A549 (cell line): ENCODE measurements at regions of chr3 and their contacts with region 1.

Region 1: GRCh38 chr3:42190701-42191462 is 75.1 kb downstream of the CCK start:
- DNase-seq: peak; percentile 47 to 61
- ATAC-seq: peak; percentile 90 to 95
- H3K4me3 ChIP-seq: no peak overlapping the region
- H3K27ac ChIP-seq: 0 out of 6 replicates have a peak overlapping the region, but pooled peaks of 1 of the 2 experiments have one; percentile 35
- H3K4me1 ChIP-seq: no peaks in the 10 kb centered on the region
- CTCF ChIP-seq: peak; percentile 78
- EP300 ChIP-seq: no peak
- POLR2A ChIP-seq: no peak
- RAD21 ChIP-seq: peak; percentile 73 to 74

Region 2: DNA sequence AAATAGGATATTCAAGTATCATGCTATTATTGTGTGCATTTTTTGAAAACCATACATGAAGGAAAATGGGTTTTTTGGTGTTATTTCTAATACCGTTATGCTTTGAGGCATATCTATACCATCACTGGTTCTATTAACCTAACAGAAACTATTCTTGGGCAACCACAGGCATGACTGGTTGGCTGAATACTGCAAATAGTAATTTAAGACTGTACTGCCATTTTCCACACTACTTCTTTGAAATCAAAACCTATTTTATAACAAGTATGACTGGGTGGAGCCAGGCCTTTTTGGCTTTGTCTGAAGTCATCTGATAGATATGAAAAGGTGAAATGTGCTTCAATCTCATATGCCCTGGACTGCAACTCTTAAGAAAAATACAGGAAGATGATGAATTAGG is 344.0 kb before region 1 on chr3:
- CTCF ChIA-PET with region 1: no interaction called
- POLR2A ChIA-PET with region 1: no interaction called
- DNase-seq: no peak
- ATAC-seq: no peak
- H3K4me3 ChIP-seq: no peak overlapping the region
- H3K27ac ChIP-seq: no peak overlapping the region
- H3K4me1 ChIP-seq: no peaks in the 10 kb centered on the region
- CTCF ChIP-seq: no peak
- EP300 ChIP-seq: no peak
- POLR2A ChIP-seq: no peak
- RAD21 ChIP-seq: no peak

Region 3: DNA sequence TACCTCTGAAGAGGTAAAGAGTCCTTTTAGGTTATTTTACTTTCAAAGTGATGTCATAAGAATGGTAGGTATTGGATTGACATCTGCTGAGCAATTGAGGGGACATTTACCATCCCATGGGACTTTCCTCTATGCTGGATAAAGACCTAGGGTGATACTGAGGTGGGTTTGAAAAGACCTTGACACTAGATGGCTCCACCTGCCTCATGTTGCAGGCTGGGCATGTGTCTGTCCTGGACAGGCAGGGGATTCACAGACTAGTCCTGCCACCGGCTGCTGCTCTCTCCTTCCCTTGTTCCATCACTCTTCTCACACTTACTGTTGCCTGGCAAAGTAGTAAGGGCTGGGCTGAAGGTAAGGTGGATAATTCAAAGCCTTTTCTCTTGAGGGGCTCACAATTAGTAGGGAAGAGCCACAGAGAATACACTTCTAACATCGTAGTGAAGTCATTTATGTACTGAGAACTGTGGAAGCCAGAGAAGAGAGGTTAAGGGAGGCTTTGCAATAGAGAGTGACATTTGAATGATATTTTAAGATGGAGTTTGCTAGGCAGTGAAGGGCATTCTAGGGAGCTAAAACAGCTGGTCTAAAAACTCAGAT is 72.0 kb before region 1 on chr3:
- CTCF ChIA-PET with region 1: interaction called, 102 read pairs
- POLR2A ChIA-PET with region 1: interaction called, 3 read pairs
- DNase-seq: peak; percentile 63 to 72
- ATAC-seq: peak; percentile 94
- H3K4me3 ChIP-seq: no peak overlapping the region
- H3K27ac ChIP-seq: 0 out of 6 replicates have a peak overlapping the region, but pooled peaks of 1 of the 2 experiments have one; percentile 29
- H3K4me1 ChIP-seq: peaks cover 15% of the 10 kb centered on the region
- CTCF ChIP-seq: peak; percentile 63
- EP300 ChIP-seq: no peak
- POLR2A ChIP-seq: no peak
- RAD21 ChIP-seq: peak; percentile 70 to 78

Region 4: GRCh38 chr3:42129014-42129953 is 61.6 kb before region 1 on chr3:
- CTCF ChIA-PET with region 1: interaction called, 14 read pairs
- POLR2A ChIA-PET with region 1: no interaction called
- DNase-seq: peak; percentile 26 to 44
- ATAC-seq: peak; percentile 61 to 72; a peak in 5 of 6 replicates
- H3K4me3 ChIP-seq: no peak overlapping the region
- H3K27ac ChIP-seq: peak overlapping the region; percentile 70 to 76
- H3K4me1 ChIP-seq: peaks cover 35% of the 10 kb centered on the region
- CTCF ChIP-seq: no peak
- EP300 ChIP-seq: no peak
- POLR2A ChIP-seq: no peak
- RAD21 ChIP-seq: no peak

Region 5: DNA sequence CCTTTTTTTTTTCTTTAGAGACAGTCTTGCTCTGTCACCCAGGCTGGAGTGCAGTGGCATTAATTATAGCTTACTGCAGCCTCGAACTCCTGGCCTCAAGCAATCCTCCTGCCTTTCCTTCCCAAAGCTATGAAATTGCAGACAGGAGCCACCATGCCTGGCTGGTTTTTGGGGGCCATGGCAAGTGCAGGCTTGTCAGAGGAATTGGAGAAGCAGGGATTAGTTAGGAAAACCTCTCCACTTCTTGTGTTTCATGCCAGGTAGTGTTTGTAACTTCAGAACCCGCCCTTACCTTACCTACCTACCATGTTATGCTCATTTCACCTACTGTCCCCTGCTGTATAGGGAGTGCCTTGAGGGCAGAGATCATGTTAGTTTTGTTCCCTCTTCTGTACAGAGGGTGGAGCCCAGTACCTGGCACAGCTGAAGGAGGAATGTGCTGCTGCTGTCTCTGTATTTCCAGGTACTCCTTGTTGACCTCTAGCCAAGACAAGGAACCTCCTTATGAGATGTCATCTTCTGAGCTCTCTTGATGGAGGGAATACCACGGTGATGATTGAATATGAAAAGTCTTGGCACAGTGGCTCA is 55.9 kb before region 1 on chr3:
- CTCF ChIA-PET with region 1: interaction called, 11 read pairs
- POLR2A ChIA-PET with region 1: no interaction called
- DNase-seq: no peak
- ATAC-seq: no peak
- H3K4me3 ChIP-seq: no peak overlapping the region
- H3K27ac ChIP-seq: no peak overlapping the region
- H3K4me1 ChIP-seq: peaks cover 15% of the 10 kb centered on the region
- CTCF ChIP-seq: no peak
- EP300 ChIP-seq: no peak
- POLR2A ChIP-seq: no peak
- RAD21 ChIP-seq: no peak

Region 6: DNA sequence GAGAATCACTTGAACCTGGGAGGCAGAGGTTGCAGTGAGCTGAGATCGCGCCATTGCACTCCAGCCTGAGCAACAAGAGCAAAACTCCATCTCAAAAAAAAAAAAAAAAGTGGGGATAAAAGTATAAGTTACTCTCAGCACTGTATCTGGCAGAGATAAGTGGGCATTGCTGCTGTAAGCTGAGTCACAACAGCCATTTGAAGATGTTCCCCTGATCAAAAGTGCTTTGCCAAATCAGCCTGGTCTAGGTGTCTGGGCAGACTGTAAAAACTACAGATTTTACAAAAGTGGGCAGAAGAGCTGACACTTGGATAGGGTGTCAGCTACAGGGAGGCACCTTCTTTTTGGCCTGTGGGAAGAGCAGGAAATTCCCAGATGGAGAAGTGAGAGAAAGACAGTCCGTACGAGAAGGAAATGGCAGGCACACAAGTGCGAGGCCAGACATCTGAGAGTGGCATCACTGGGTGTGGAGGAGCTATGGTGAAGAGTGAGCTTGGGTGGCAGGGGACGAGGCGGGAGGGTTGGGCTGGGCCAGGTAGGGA is 21.2 kb before region 1 on chr3:
- CTCF ChIA-PET with region 1: interaction called, 11 read pairs
- POLR2A ChIA-PET with region 1: no interaction called
- DNase-seq: no peak
- ATAC-seq: no peak
- H3K4me3 ChIP-seq: no peak overlapping the region
- H3K27ac ChIP-seq: no peak overlapping the region
- H3K4me1 ChIP-seq: peaks cover 3% of the 10 kb centered on the region; the same call in 1 of the 3 replicates
- CTCF ChIP-seq: no peak
- EP300 ChIP-seq: no peak
- POLR2A ChIP-seq: no peak
- RAD21 ChIP-seq: no peak

Region 7: GRCh38 chr3:42205800-42206514 is 15.1 kb after region 1 on chr3:
- CTCF ChIA-PET with region 1: interaction called, 30 read pairs
- POLR2A ChIA-PET with region 1: no interaction called
- DNase-seq: no peak
- ATAC-seq: no peak
- H3K4me3 ChIP-seq: no peak overlapping the region
- H3K27ac ChIP-seq: no peak overlapping the region
- H3K4me1 ChIP-seq: no peaks in the 10 kb centered on the region
- CTCF ChIP-seq: no peak
- EP300 ChIP-seq: no peak
- POLR2A ChIP-seq: no peak
- RAD21 ChIP-seq: no peak